Endothelial cell of umbilical vein (primary cell): ENCODE measurements at regions of chr15 and their contacts with region 1.

Region 1: DNA sequence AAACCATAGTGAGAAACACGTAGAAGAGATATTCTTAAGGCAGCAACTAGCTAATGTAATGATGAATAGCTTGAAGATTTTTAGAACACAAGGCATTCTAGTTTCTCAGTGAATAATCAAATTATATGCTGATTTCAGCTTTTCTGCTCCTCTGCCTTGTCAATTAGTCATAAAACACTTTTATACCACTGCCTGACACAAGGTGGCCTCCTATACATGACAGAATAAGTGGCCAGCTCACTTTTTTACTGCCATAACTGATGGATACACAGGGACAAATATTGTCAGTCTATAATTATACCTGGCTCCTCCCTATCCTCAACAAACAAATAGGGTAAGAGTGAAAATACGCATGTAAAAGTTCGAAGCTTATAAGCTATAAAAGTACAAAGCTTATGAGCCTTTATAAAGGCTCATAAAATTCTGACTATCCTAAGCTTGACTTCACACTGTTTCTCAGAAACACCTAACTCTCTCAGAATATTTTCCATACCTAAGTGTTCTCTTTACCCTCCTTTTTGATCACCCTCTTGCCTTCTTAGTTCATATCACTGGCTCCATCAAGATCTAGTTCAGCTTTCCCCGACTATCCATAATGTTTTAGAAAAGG is 81.6 kb downstream of the HERC1 start:
- DNase-seq: peak; percentile 78
- H3K4me3 ChIP-seq: no peak overlapping the region
- H3K27ac ChIP-seq: no peak overlapping the region
- H3K4me1 ChIP-seq: no peaks in the 10 kb centered on the region
- H3K27me3 ChIP-seq: no peaks in the 10 kb centered on the region
- CTCF ChIP-seq: peak; percentile 44 to 62
- POLR2A ChIP-seq: no peak

Region 2: GRCh38 chr15:62880278-62880677 is 871.9 kb before region 1 on chr15:
- CTCF ChIA-PET with region 1: no interaction called
- POLR2A ChIA-PET with region 1: no interaction called
- dilution Hi-C with region 1: no loop called
- intact Hi-C with region 1: no loop called
- DNase-seq: no peak
- H3K4me3 ChIP-seq: peak overlapping the region in 1 of 3 experiments; percentile 15
- H3K27ac ChIP-seq: peak overlapping the region; percentile 63
- H3K4me1 ChIP-seq: peaks cover 18% of the 10 kb centered on the region
- H3K27me3 ChIP-seq: no peaks in the 10 kb centered on the region
- CTCF ChIP-seq: no peak
- POLR2A ChIP-seq: no peak

Region 3: DNA sequence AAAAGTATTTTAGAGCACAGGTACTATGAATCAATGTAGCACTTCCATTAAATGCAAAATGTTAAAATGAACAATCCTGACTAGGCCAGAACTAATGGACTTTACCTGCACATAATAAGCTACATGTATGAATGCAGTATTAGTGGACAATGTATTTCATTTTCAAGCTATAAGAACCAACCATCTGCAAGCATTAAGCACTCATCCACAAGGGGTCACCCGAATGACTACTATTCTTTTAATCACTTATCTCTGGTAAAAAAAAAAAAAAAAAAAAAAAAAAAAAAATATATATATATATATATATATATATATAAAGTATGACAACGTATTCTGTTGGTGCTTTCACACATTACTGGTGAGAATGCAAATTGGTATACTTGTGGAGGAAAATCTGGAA is 74.3 kb after region 1 on chr15:
- CTCF ChIA-PET with region 1: interaction called, 29 read pairs
- POLR2A ChIA-PET with region 1: no interaction called
- dilution Hi-C with region 1: no loop called
- intact Hi-C with region 1: loop called (anchors 5 kb)
- DNase-seq: peak; percentile 47
- H3K4me3 ChIP-seq: no peak overlapping the region
- H3K27ac ChIP-seq: no peak overlapping the region
- H3K4me1 ChIP-seq: peaks cover 4% of the 10 kb centered on the region
- H3K27me3 ChIP-seq: no peaks in the 10 kb centered on the region
- CTCF ChIP-seq: peak in 1 of 2 donors; percentile 10
- POLR2A ChIP-seq: no peak

Region 4: DNA sequence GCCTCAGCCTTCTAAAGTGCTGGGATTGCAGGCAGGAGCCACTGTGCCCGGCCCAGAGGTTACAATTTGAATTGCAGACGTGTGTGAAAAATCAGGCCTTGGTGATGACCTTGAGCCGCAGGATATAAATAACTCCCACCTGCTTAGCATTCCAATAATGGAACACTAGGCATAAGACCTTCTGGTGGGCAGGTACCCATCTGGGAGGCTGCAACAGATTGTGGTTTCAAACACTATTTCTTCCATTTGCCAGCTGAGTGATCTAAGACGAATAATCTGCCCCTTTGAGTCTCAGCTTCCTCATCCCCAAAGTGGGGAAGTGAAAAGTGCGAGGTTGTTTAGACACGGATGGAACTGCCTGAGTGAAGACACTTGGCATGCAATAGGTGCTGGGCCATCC is 129.3 kb after region 1 on chr15:
- CTCF ChIA-PET with region 1: interaction called, 11 read pairs
- POLR2A ChIA-PET with region 1: no interaction called
- dilution Hi-C with region 1: no loop called
- intact Hi-C with region 1: no loop called
- DNase-seq: no peak
- H3K4me3 ChIP-seq: no peak overlapping the region
- H3K27ac ChIP-seq: no peak overlapping the region
- H3K4me1 ChIP-seq: peaks cover 5% of the 10 kb centered on the region
- H3K27me3 ChIP-seq: no peaks in the 10 kb centered on the region
- CTCF ChIP-seq: no peak
- POLR2A ChIP-seq: no peak

Region 5: DNA sequence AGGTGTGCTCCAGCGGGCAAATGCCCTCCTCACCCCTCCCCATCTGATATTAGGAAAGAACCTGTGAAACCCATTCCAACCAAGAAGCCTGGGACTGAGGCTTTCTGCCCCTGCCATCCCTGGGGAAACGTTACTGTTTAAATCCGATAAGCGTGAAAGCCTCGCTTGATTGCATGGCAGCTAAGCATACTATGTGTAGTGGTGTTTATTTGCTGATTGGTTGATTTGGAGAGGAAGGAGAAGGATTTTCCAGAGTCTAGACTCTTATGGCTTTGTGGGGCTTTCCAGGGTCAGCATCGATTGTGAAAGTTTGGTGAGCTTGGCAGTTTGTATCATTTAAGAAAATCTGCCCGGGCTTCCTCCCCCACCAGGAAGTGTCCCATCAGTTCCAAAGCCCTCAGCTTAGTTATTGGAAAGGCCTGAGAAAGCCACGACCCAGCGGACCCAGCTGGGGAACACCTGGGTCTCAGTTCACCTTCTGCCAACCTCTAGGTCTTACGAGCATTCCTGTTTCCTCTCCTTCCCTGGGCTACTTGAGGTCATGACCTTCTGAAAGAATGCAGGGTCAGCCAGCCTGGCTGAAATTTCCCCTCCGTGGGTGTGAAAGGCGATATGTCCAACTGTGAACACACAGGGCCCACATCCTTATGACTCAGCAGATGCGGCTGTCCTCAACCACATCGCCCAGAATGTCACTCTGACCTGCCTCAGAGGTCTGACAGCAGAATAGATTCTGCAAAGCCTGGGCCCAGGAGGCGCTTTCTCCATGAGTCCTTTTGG is 144.3 kb after region 1 on chr15:
- CTCF ChIA-PET with region 1: interaction called, 105 read pairs
- POLR2A ChIA-PET with region 1: interaction called, 3 read pairs
- dilution Hi-C with region 1: no loop called
- intact Hi-C with region 1: loop called (anchors 1 kb)
- DNase-seq: peak; percentile 69
- H3K4me3 ChIP-seq: no peak overlapping the region
- H3K27ac ChIP-seq: peak overlapping the region; percentile 35
- H3K4me1 ChIP-seq: peaks cover 11% of the 10 kb centered on the region
- H3K27me3 ChIP-seq: no peaks in the 10 kb centered on the region
- CTCF ChIP-seq: no peak
- POLR2A ChIP-seq: no peak

Region 6: GRCh38 chr15:63986751-63987341 is 234.7 kb after region 1 on chr15:
- CTCF ChIA-PET with region 1: interaction called, 42 read pairs
- POLR2A ChIA-PET with region 1: no interaction called
- dilution Hi-C with region 1: no loop called
- intact Hi-C with region 1: loop called (anchors 1 kb)
- DNase-seq: no peak
- H3K4me3 ChIP-seq: no peak overlapping the region
- H3K27ac ChIP-seq: no peak overlapping the region
- H3K4me1 ChIP-seq: peaks cover 3% of the 10 kb centered on the region
- H3K27me3 ChIP-seq: no peaks in the 10 kb centered on the region
- CTCF ChIP-seq: no peak
- POLR2A ChIP-seq: no peak

Region 7: DNA sequence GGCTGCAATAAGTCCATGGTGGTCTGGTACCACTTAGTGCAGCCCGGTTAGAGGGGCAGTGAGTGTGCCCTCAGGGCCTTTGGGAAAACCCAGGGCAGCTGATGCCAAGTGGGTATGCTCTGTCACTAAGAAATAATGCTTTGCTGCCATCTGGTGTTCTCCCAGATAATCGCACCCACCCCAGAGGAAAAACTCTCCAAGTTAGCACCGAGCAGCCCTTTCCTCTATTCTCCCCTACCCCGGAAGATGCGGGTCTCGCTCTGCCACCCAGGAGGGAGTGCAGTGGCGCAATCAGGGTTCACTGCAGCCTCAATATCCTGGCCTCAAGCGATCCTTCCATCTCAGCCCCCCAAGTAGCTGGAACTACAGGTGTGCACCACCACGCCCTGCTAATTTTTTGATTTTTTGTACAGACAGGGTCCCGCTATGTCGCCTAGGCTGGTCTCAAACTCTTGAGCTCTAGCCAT is 315.4 kb after region 1 on chr15:
- CTCF ChIA-PET with region 1: interaction called, 180 read pairs
- POLR2A ChIA-PET with region 1: no interaction called
- dilution Hi-C with region 1: no loop called
- intact Hi-C with region 1: loop called (anchors 1 kb)
- DNase-seq: peak; percentile 64
- H3K4me3 ChIP-seq: no peak overlapping the region
- H3K27ac ChIP-seq: no peak overlapping the region
- H3K4me1 ChIP-seq: peaks cover 17% of the 10 kb centered on the region
- H3K27me3 ChIP-seq: no peaks in the 10 kb centered on the region
- CTCF ChIP-seq: peak; percentile 63 to 81
- POLR2A ChIP-seq: no peak

Region 8: DNA sequence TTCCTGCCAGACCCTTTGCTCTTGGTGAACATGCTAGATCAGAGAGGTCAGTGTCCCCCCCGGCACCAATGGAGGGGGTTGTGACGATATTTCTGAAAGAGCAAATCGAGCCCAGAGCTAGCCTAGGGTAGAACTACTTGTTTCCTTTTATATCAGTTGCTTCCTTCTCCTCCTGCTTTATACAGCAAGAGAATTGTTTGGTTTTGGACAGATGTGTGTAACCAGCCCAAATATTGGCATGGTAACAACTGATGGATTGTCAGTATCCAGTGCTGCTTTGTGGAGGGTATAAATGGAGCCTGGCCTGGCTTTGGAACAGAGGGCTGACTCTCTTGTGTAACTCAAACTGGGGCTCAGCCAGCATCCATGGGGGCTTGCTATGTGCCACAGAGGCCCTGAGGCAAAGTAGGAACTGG is 370.8 kb after region 1 on chr15:
- CTCF ChIA-PET with region 1: no interaction called
- POLR2A ChIA-PET with region 1: no interaction called
- dilution Hi-C with region 1: no loop called
- intact Hi-C with region 1: no loop called
- DNase-seq: no peak
- H3K4me3 ChIP-seq: no peak overlapping the region
- H3K27ac ChIP-seq: no peak overlapping the region
- H3K4me1 ChIP-seq: no peaks in the 10 kb centered on the region
- H3K27me3 ChIP-seq: no peaks in the 10 kb centered on the region
- CTCF ChIP-seq: no peak
- POLR2A ChIP-seq: no peak

Region 9: GRCh38 chr15:64153480-64154367 is 401.5 kb after region 1 on chr15:
- CTCF ChIA-PET with region 1: interaction called, 3 read pairs
- POLR2A ChIA-PET with region 1: no interaction called
- dilution Hi-C with region 1: no loop called
- intact Hi-C with region 1: loop called (anchors 5 kb)
- DNase-seq: peak; percentile 86
- H3K4me3 ChIP-seq: no peak overlapping the region
- H3K27ac ChIP-seq: no peak overlapping the region
- H3K4me1 ChIP-seq: peaks cover 5% of the 10 kb centered on the region
- H3K27me3 ChIP-seq: peaks cover 5 to 12% of the 10 kb centered on the region in 2 experiments
- CTCF ChIP-seq: peak; percentile 97 to 100
- POLR2A ChIP-seq: peak; percentile 84

Region 10: DNA sequence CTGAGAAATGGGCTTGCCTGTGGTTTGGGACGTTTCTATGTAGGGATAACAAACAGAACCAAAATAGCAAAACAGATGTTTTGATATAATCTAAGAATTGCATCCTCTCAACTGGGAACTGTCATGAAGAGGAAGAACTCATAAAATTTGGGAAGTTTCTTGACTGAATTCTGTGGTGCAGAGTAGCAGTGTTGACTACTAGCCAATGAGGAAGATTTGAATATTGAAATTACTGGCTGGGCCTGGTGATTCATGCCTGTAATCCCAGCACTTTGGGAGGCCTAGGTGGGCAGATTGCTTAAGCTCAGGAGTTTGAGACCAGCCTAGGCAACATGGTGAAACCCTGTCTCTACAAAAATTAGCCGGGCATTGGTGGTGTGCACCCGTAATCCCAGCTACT is 750.4 kb after region 1 on chr15:
- CTCF ChIA-PET with region 1: no interaction called
- POLR2A ChIA-PET with region 1: no interaction called
- dilution Hi-C with region 1: no loop called
- intact Hi-C with region 1: no loop called
- DNase-seq: no peak
- H3K4me3 ChIP-seq: no peak overlapping the region
- H3K27ac ChIP-seq: peak overlapping the region; percentile 56
- H3K4me1 ChIP-seq: peaks cover 28% of the 10 kb centered on the region
- H3K27me3 ChIP-seq: no peaks in the 10 kb centered on the region
- CTCF ChIP-seq: no peak
- POLR2A ChIP-seq: no peak